Activated CD4-positive, alpha-beta memory T cell treated with anti-CD3 and anti-CD28 coated beads, Interleukin-2, amount 10 ng/mL, durations not matched to agents 7 days and 5 days (primary cell): ENCODE measurements at regions of chr2 and their contacts with region 1.

Region 1: GRCh38 chr2:65300761-65301711 is 73.4 kb downstream of the ACTR2 start:
- DNase-seq: peak; percentile 83
- H3K4me3 Mint-ChIP-seq: peak overlapping the region; percentile 63
- H3K27ac Mint-ChIP-seq: peak overlapping the region; percentile 85
- H3K4me1 Mint-ChIP-seq: peaks cover 52% of the 10 kb centered on the region
- H3K27me3 Mint-ChIP-seq: peaks cover 30% of the 10 kb centered on the region

Region 2: DNA sequence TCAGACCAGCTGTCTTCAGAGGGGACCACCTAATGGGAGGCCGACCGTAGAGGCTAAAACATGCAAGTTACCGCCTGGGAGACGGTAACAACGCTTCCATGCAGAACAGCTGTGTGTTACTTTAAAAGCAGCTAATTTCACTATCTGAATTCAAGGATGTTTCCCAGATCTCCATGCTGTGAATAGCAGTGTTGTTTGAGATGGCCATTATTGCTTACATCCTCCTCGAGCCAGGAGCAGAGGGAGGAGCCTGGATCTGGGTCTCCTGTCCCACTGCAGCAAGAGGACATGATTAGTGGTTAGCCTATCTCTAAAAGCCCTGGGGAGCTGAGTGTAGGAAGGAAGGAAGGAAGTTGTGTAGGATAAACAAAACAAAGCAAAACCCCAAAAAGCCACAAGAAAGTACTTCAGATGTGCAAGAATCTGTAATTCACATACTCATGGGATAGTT is 22.5 kb before region 1 on chr2:
- CTCF ChIA-PET with region 1: interaction called, 5 read pairs
- POLR2A ChIA-PET with region 1: interaction called, 13 read pairs
- DNase-seq: no peak
- H3K4me3 Mint-ChIP-seq: no peak overlapping the region
- H3K27ac Mint-ChIP-seq: no peak overlapping the region
- H3K4me1 Mint-ChIP-seq: peaks cover 14% of the 10 kb centered on the region
- H3K27me3 Mint-ChIP-seq: no peaks in the 10 kb centered on the region

Region 3: GRCh38 chr2:65345631-65346030 is 44.6 kb after region 1 on chr2:
- CTCF ChIA-PET with region 1: no interaction called
- POLR2A ChIA-PET with region 1: no interaction called
- DNase-seq: no peak
- H3K4me3 Mint-ChIP-seq: no peak overlapping the region
- H3K27ac Mint-ChIP-seq: no peak overlapping the region
- H3K4me1 Mint-ChIP-seq: peaks cover 14% of the 10 kb centered on the region
- H3K27me3 Mint-ChIP-seq: no peaks in the 10 kb centered on the region

Region 4: GRCh38 chr2:65432227-65433190 is 131.5 kb after region 1 on chr2 and contains the start of gene SPRED2:
- CTCF ChIA-PET with region 1: no interaction called
- POLR2A ChIA-PET with region 1: interaction called, 21 read pairs
- DNase-seq: peak; percentile 81
- H3K4me3 Mint-ChIP-seq: peak within 1 kb of the TSS; percentile 92
- H3K27ac Mint-ChIP-seq: peak within 1 kb of the TSS; percentile 72
- H3K4me1 Mint-ChIP-seq: peaks cover 32% of the 10 kb centered on the region
- H3K27me3 Mint-ChIP-seq: peaks cover 45% of the 10 kb centered on the region
- total RNA-seq, gene SPRED2: 12.2 to 12.6 TPM